ENCODE measurements at regions of chr6 and their contacts with region 1.

Region 1: DNA sequence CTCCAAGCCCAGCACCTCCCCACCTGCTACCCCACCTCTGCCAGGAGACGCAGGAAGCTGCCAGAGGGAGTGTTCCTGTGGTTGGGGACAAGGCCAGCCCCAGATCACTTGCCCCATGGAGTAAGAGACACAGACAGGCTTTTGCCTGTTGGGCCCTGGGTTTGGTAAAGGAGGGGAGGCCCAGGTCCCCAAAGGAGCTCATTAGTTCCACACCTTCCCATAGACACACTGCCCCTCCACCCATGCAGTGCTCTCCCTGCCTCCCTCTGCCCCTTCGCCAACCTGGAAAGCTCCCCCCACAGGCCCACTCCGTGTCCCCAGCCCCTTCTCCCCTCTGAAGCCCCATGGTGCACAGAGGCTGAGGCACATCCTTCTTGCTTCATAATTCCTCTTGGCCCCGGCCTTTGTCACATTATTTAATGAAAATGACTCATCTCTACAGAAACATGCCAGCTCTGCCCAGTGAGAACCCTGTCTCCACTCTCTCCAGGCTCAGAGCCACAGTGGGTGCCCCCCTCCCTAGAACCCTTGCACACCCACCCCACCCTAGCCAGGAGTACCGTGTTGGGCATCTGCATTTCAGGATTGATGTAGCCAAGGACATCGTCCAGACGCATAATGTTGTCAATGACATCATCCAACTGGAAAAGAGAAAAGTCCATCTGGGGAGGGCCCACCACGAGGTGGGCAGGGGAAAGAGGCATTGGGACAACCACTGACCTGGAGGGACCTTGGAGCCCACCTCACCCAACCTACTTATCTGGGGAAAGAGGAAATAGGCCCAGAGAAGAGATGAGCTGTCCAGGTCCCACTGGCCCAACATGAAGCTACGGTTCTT is 46.0 kb downstream of the TFEB start:
- DNase-seq: no peak
- H3K4me3 ChIP-seq: no peak overlapping the region
- H3K27ac ChIP-seq: no peak overlapping the region
- H3K4me1 ChIP-seq: peaks cover 10% of the 10 kb centered on the region
- H3K27me3 ChIP-seq: no peaks in the 10 kb centered on the region
- CTCF ChIP-seq: no peak

Region 2: DNA sequence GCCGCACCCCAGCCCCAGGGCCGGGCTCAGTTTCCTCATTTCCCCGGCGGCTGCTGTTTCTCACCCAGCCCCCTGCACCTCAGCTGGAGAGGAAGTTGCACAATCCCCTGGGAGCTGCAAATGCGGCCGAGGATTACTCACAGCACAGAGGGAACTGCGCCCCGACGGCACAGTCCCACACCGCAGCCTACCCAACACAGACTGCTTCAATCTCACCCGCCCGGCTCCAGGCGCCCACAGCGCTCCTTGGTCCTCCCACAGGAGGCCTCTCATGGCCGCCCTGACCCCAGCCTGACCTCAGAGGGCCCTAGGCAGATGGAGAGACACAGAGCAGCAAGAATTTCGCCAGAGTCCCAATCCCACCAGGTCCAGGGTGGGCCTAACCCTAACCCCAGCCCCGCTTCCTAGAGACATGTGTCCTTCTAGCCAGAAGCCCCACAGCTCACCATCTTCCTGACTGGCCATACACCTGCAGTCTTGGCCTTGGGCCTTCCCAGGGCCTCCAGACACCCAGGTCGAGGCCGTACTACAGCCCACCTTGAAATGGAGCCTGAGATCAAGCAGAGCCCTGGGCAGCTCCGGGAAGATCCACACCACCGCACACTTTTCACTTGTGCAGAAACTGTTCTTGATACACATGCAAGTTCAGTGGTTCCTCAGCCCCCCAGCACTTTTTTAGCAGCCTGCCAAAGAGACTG is 34.3 kb after region 1 on chr6:
- CTCF ChIA-PET with region 1: no interaction called
- dilution Hi-C with region 1: no loop called
- in situ Hi-C with region 1: no loop called
- intact Hi-C with region 1: no loop called
- DNase-seq: peak; percentile 83
- H3K4me3 ChIP-seq: peak overlapping the region in 1 of 3 experiments; percentile 12
- H3K27ac ChIP-seq: peak overlapping the region; percentile 35
- H3K4me1 ChIP-seq: peaks cover 38% of the 10 kb centered on the region
- H3K27me3 ChIP-seq: no peaks in the 10 kb centered on the region
- CTCF ChIP-seq: peak in 1 of 2 donors; percentile 27

Region 3: DNA sequence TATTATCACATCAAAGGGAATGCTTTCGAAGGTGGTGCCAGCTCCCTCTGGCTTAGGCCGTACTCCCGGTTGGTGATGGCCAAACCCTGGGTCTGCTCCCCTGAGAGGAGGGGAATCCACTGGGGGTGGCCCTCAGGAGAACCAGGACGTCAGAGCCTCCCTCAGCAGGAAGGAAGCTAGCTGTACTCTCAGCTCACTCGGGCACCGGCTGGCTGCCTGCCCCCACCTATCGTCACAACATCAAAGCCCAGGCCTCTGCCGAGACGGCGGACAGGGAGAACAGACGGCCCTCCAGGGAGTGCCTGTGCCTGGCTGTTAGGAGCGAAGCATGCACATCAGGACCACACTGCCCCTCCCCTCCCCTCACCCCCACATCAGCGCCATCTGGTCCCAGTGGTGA is 67.0 kb after region 1 on chr6:
- CTCF ChIA-PET with region 1: no interaction called
- dilution Hi-C with region 1: no loop called
- in situ Hi-C with region 1: no loop called
- intact Hi-C with region 1: no loop called
- DNase-seq: no peak
- H3K4me3 ChIP-seq: no peak overlapping the region
- H3K27ac ChIP-seq: no peak overlapping the region
- H3K4me1 ChIP-seq: no peaks in the 10 kb centered on the region
- H3K27me3 ChIP-seq: no peaks in the 10 kb centered on the region
- CTCF ChIP-seq: no peak

Region 4: GRCh38 chr6:42038811-42039408 is 349.5 kb after region 1 on chr6:
- CTCF ChIA-PET with region 1: no interaction called
- dilution Hi-C with region 1: loop called (anchors 5 kb)
- in situ Hi-C with region 1: no loop called
- intact Hi-C with region 1: no loop called
- DNase-seq: no peak
- H3K4me3 ChIP-seq: no peak overlapping the region
- H3K27ac ChIP-seq: no peak overlapping the region
- H3K4me1 ChIP-seq: peaks cover 3% of the 10 kb centered on the region
- H3K27me3 ChIP-seq: no peaks in the 10 kb centered on the region
- CTCF ChIP-seq: no peak